ENCODE measurements at regions of chr13 and their contacts with region 1.

Region 1: DNA sequence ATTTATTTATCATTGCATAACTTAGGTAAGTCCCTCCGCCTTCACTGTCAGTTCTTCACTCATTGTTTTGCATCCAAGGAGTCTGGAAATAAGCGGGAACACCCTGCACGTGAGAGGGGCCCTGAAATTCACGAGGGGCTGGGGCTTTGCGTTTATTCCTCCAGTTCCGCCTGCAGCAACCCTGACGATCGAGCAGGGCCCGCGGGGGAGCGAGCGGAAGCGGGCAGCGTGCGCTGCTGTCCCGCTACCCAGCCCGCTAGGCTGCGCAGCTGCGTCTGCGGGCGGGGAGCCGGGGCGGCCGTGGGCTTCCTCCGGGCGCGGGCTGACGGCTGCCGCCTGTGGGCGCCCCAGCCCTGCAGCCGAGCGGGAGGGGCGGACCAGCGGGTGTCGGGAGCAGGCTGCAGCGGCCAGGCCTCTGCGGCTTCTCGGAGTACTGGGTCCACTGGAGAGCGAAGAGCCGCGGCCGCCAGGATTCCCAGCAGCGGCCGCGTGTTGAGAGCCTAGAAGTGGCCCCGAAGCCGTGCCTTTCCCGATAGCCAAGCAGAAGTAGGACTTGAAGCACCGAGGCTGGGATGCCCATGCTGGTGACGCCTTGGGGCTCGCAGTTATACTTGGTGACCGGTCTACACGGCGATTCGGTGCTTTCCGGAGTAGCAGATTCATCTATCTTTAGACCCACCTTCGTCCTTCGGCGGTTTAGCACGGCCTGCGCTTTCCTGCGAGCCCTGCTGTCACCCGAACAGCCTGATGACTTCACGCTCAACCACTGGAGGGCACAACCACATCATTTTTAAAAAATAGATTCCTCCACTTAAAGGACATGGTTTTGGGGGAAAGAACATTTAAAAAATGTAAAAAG is 32.9 kb upstream of the SACS start:
- DNase-seq: peak; percentile 43 to 65 (median 63)
- H3K4me3 ChIP-seq: peak overlapping the region in 1 of 2 donors; percentile 44
- H3K4me3 Mint-ChIP-seq: peak overlapping the region; percentile 76 to 89 (median 83)
- H3K27ac ChIP-seq: no peak overlapping the region
- H3K27ac Mint-ChIP-seq: peak overlapping the region in 3 of 7 donors; percentile 11 to 69 (median 63)
- H3K4me1 ChIP-seq: peaks cover 4% of the 10 kb centered on the region
- H3K4me1 Mint-ChIP-seq: peaks cover 0 to 8% (median 2%) of the 10 kb centered on the region in 4 donors
- H3K27me3 ChIP-seq: no peaks in the 10 kb centered on the region
- H3K27me3 Mint-ChIP-seq: peaks cover 7% of the 10 kb centered on the region in 2 donors

Region 2: GRCh38 chr13:23531446-23531845 is 65.1 kb after region 1 on chr13:
- CTCF ChIA-PET with region 1: no interaction called
- POLR2A ChIA-PET with region 1: no interaction called
- intact Hi-C with region 1: no loop called
- DNase-seq: no peak
- H3K4me3 ChIP-seq: no peak overlapping the region
- H3K4me3 Mint-ChIP-seq: no peak overlapping the region
- H3K27ac ChIP-seq: no peak overlapping the region
- H3K27ac Mint-ChIP-seq: no peak overlapping the region
- H3K4me1 ChIP-seq: no peaks in the 10 kb centered on the region
- H3K4me1 Mint-ChIP-seq: no peaks in the 10 kb centered on the region
- H3K27me3 ChIP-seq: no peaks in the 10 kb centered on the region
- H3K27me3 Mint-ChIP-seq: peaks cover 2 to 6% of the 10 kb centered on the region in 2 donors

Region 3: GRCh38 chr13:23778002-23778652 is 311.8 kb after region 1 on chr13:
- CTCF ChIA-PET with region 1: no interaction called
- POLR2A ChIA-PET with region 1: no interaction called
- intact Hi-C with region 1: loop called (anchors 1 kb)
- DNase-seq: no peak
- H3K4me3 ChIP-seq: no peak overlapping the region
- H3K4me3 Mint-ChIP-seq: no peak overlapping the region
- H3K27ac ChIP-seq: no peak overlapping the region
- H3K27ac Mint-ChIP-seq: no peak overlapping the region
- H3K4me1 ChIP-seq: no peaks in the 10 kb centered on the region
- H3K4me1 Mint-ChIP-seq: peaks cover 16 to 22% (median 20%) of the 10 kb centered on the region in 4 donors
- H3K27me3 ChIP-seq: no peaks in the 10 kb centered on the region
- H3K27me3 Mint-ChIP-seq: no peaks in the 10 kb centered on the region

Region 4: DNA sequence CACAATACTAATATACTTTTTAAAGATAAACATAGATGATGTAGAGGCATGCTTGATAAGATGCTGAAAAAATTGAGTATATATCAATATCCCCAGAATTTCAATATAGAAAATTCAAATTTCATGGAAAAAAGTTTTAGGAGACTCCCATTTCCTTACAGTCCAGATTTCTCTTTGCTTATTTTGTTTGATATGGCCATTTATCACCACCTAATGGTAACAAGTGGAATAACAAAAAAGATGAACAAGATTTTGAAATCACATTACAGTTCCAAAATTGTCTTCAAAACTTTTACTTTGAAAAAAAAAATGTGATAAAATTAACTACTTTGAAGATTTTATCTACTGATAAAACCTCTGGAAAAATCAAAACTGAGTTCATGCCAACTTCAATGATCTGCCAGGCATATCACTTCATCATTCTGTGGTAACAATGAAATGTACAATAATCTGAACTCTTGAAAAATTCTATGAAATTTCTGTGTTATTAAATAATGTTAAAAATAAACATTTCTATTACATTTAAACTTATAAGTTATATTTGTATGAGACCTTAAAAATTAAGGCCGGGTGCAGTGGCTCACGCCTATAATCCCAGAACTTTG is 405.3 kb after region 1 on chr13:
- CTCF ChIA-PET with region 1: interaction called, 12 read pairs
- POLR2A ChIA-PET with region 1: no interaction called
- intact Hi-C with region 1: loop called (anchors 1 kb)
- DNase-seq: peak in 4 of 5 donors; percentile 11 to 28 (median 20)
- H3K4me3 ChIP-seq: no peak overlapping the region
- H3K4me3 Mint-ChIP-seq: no peak overlapping the region
- H3K27ac ChIP-seq: no peak overlapping the region
- H3K27ac Mint-ChIP-seq: no peak overlapping the region
- H3K4me1 ChIP-seq: no peaks in the 10 kb centered on the region
- H3K4me1 Mint-ChIP-seq: no peaks in the 10 kb centered on the region
- H3K27me3 ChIP-seq: no peaks in the 10 kb centered on the region
- H3K27me3 Mint-ChIP-seq: no peaks in the 10 kb centered on the region

Region 5: DNA sequence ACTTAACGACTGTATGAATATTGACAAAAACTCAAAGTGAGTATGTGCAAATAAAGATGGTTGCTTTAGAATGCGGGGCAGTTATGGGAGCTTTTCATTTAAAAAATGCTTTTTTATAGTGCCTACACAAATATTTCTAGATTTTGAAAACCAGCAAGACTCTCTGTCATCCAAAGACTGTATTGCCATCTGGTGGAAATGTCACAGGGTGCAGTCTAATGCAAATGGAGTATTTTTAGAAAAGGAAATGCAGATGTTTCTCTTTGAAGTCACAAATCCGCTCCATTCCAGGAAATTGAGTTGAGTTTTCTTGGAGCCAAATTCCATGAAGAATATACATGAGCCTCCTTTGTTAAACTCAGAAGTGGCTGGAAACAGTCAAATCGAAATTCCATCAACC is 433.2 kb after region 1 on chr13:
- CTCF ChIA-PET with region 1: interaction called, 46 read pairs
- POLR2A ChIA-PET with region 1: no interaction called
- intact Hi-C with region 1: loop called (anchors 1 kb)
- DNase-seq: peak in 3 of 5 donors; percentile 31 to 50 (median 34)
- H3K4me3 ChIP-seq: no peak overlapping the region
- H3K4me3 Mint-ChIP-seq: no peak overlapping the region
- H3K27ac ChIP-seq: no peak overlapping the region
- H3K27ac Mint-ChIP-seq: no peak overlapping the region
- H3K4me1 ChIP-seq: peaks cover 6% of the 10 kb centered on the region
- H3K4me1 Mint-ChIP-seq: peaks cover 1 to 14% (median 5%) of the 10 kb centered on the region in 4 donors
- H3K27me3 ChIP-seq: peaks cover 8% of the 10 kb centered on the region
- H3K27me3 Mint-ChIP-seq: peaks cover 23 to 27% of the 10 kb centered on the region in 2 donors

Region 6: DNA sequence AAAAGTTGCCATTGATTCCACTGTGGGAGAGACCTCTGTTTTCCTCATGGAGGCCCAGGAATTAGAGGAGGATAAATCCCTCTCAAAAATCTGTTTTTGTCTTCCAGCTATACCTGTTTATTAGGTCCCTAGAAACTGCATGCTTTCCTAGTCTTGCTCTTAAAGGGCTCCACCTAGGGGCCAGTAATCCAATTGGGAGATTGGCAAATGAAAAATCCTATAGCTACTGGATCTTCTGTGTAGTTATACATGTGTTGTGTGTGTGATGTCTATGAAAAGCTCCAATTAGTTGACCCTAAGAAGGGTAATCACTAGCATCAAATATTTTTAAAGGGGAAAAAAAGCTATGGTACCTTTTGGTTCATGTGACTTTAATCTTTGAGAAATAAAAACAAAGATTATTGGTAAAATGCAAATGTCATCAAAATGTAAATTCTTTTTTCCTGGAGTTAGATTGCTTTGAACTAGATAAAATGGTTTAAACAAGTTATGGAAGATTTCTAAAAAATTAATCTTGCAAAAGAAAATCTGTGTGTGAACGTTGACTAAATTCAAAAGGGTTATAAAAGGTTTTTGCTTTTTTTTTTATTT is 494.3 kb after region 1 on chr13:
- CTCF ChIA-PET with region 1: interaction called, 3 read pairs
- POLR2A ChIA-PET with region 1: no interaction called
- intact Hi-C with region 1: loop called (anchors 1 kb)
- DNase-seq: peak in 2 of 5 donors; percentile 17 to 19
- H3K4me3 ChIP-seq: no peak overlapping the region
- H3K4me3 Mint-ChIP-seq: no peak overlapping the region
- H3K27ac ChIP-seq: no peak overlapping the region
- H3K27ac Mint-ChIP-seq: no peak overlapping the region
- H3K4me1 ChIP-seq: no peaks in the 10 kb centered on the region
- H3K4me1 Mint-ChIP-seq: peaks cover 0 to 8% (median 3%) of the 10 kb centered on the region in 4 donors
- H3K27me3 ChIP-seq: no peaks in the 10 kb centered on the region
- H3K27me3 Mint-ChIP-seq: no peaks in the 10 kb centered on the region

Measured in CD4-positive, alpha-beta memory T cell (primary cell).